SK-N-SH (cell line): ENCODE measurements at regions of chr4 and their contacts with region 1.

Region 1: DNA sequence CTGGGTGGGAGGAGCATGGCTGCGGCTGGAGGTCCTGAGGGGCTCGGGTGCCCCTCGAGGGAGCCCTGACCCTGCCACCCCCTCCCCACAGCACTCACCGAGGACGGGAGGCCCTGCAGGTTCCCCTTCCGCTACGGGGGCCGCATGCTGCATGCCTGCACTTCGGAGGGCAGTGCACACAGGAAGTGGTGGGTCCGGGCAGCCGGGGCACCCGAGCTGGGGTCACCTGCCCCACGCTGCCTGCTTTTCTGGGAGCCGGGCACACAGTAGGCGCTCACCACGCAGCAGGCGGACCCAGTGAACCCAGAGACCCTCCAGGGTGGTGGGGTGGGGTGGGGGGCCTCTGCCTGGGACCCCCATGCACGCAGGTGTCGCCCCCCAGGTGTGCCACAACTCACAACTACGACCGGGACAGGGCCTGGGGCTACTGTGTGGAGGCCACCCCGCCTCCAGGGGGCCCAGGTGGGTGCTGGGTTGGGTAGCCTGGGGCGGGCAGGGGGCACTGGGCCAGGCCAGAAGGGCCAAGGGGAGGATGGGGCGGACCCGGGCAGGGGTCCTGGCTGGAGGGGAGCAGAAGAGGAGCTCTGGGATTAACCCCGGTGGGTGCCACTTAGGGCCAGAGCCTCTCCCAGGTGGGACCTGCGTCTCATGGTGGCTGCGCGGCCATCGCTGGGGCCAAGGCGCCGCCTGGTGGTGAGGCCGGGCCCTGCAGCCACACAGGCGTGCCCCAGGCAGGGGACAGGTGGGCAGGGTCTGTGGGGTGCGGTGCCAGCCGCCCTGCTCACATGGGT is 1.4 kb downstream of the HGFAC start:
- DNase-seq: peak; percentile 94
- H3K4me3 ChIP-seq: no peak overlapping the region
- H3K27ac ChIP-seq: no peak overlapping the region
- H3K4me1 ChIP-seq: no peaks in the 10 kb centered on the region
- H3K27me3 ChIP-seq: no peaks in the 10 kb centered on the region
- CTCF ChIP-seq: peak; percentile 90
- EP300 ChIP-seq: no peak
- RAD21 ChIP-seq: peak; percentile 86

Region 2: DNA sequence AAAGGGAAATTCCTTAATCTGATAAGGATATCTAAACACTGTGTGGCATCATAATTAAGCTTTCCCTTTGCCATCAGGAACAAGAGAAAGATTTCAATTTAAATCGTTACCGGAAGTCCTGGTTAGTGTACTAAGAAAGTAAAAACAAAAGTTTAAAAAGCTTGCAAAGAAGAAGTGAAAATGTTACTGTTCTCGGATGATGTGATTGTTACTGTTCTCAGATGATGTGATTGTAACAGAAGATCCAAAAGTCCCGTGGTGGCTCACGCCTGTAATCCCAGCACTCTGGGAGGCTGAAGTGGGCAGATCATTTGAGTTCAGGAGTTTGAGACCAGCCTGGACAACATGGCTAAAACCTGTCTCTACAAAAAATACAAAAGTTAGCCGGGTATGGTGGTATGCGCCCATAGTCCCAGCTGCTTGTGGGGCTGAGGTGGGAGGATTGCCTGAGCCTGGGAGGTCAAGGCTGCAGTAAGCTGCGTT is 87.8 kb before region 1 on chr4:
- CTCF ChIA-PET with region 1: interaction called, 21 read pairs
- POLR2A ChIA-PET with region 1: no interaction called
- DNase-seq: no peak
- H3K4me3 ChIP-seq: no peak overlapping the region
- H3K27ac ChIP-seq: no peak overlapping the region
- H3K4me1 ChIP-seq: no peaks in the 10 kb centered on the region
- H3K27me3 ChIP-seq: no peaks in the 10 kb centered on the region
- CTCF ChIP-seq: no peak
- EP300 ChIP-seq: no peak
- RAD21 ChIP-seq: no peak

Region 3: GRCh38 chr4:3426465-3427133 is 16.6 kb before region 1 on chr4:
- CTCF ChIA-PET with region 1: interaction called, 15 read pairs
- POLR2A ChIA-PET with region 1: no interaction called
- DNase-seq: no peak
- H3K4me3 ChIP-seq: no peak overlapping the region
- H3K27ac ChIP-seq: no peak overlapping the region
- H3K4me1 ChIP-seq: no peaks in the 10 kb centered on the region
- H3K27me3 ChIP-seq: no peaks in the 10 kb centered on the region
- CTCF ChIP-seq: no peak
- EP300 ChIP-seq: no peak
- RAD21 ChIP-seq: no peak